OCI-LY7 (cell line): ENCODE measurements at regions of chr6 and their contacts with region 1.

Region 1: GRCh38 chr6:24689964-24690363 is 23.1 kb downstream of the ACOT13 start:
- DNase-seq: no peak
- H3K4me3 ChIP-seq: no peak overlapping the region
- H3K27ac ChIP-seq: no peak overlapping the region
- H3K4me1 ChIP-seq: peaks cover 7% of the 10 kb centered on the region
- CTCF ChIP-seq: no peak

Region 2: DNA sequence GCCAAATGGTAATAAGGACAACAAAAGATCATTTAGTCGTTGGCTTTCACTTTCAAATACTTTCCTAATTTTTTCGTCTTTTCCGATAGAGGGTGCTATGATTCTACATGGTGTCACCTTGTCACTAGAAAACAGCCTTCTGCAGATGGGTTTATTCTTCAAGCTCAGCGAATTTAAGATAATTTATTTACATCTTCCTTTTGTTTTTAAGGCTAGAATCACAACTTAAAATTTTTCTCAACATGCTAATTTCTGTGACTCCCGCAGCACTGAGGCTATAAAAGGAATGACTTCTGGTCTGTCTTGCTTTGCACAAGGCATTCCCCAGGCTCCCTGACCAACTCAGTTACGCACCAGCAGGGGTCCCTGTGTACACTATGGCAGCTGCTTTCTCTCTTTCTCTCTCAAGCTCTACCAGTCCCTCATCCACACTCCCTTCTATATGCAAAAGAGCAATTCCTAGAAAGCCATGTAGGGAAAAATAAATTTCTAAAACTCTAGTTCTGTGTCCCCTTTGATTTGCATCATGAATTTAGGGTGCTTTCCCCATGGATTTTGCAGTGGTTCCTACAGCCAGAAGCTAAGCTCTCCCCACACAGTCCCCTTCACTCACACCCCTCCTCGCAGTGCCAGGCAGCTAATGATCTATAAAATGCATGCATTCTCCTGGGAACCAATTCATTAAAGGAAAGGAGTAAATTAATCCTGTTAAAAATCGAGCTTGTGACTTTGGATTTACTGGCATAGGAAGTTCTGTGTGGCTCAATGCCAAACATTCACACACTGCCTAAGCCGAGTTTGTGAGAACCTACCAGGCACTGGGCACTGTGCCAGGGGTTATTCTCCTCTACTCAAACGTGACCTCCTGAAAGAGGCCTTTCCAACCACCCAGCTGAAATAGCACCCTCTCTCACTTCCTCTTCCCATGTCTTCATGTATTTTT is 406.6 kb before region 1 on chr6:
- CTCF ChIA-PET with region 1: no interaction called
- POLR2A ChIA-PET with region 1: no interaction called
- intact Hi-C with region 1: loop called (anchors 2 kb)
- DNase-seq: peak; percentile 65
- H3K4me3 ChIP-seq: no peak overlapping the region
- H3K27ac ChIP-seq: no peak overlapping the region
- H3K4me1 ChIP-seq: peaks cover 7% of the 10 kb centered on the region
- CTCF ChIP-seq: peak; percentile 95

Region 3: GRCh38 chr6:24431045-24431451 is 258.9 kb before region 1 on chr6:
- CTCF ChIA-PET with region 1: no interaction called
- POLR2A ChIA-PET with region 1: interaction called, 3 read pairs
- intact Hi-C with region 1: loop called (anchors 5 kb)
- DNase-seq: peak; percentile 58
- H3K4me3 ChIP-seq: no peak overlapping the region
- H3K27ac ChIP-seq: no peak overlapping the region
- H3K4me1 ChIP-seq: no peaks in the 10 kb centered on the region
- CTCF ChIP-seq: peak; percentile 95

Region 4: DNA sequence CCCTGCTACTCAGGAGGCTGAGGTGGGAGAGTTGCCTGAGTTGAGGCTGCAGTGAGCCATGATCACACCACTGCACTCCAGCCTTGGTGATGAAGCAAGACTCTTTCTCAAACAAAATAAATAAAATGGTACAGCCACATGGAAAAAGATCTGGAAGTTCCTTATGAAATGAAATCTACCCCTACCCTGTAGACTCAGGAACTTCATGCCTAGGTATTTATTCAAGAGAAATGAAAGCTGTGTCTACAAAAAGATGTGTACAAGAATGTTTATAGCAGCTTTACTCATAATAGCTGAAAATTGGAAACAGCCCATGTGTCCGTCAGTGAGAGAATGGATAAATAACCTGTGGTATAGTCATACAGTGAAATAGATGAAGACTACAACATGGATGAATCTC is 44.2 kb after region 1 on chr6:
- CTCF ChIA-PET with region 1: no interaction called
- POLR2A ChIA-PET with region 1: no interaction called
- intact Hi-C with region 1: no loop called
- DNase-seq: no peak
- H3K4me3 ChIP-seq: no peak overlapping the region
- H3K27ac ChIP-seq: no peak overlapping the region
- H3K4me1 ChIP-seq: no peaks in the 10 kb centered on the region
- CTCF ChIP-seq: no peak

Region 5: DNA sequence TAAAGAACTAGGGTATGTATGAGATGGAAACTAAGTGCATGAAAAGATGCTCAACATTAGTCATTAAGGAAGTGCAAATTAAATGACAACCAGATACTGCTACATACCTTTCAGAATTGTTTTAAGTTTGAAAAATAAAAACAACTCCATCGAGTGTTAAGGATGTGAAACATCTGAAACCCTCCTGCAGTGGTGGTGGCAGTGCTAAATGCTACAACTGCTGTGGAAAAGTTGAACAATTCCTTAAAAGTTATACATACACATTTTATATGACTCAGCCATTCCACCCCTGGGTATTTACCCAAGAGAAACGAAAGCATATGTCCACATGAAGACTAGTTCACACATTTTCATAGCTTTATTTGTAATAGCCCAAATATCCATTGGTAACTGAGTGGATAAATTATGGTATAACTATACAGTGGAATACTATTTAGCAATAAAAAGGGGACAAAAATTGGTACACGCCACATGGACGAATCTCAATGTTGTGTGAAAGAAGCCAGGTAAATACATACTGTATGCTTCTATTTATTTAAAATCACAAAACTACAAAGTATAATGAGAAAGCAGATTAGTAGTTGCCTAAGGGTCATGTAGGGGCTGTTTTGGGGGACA is 98.2 kb after region 1 on chr6:
- CTCF ChIA-PET with region 1: no interaction called
- POLR2A ChIA-PET with region 1: no interaction called
- intact Hi-C with region 1: no loop called
- DNase-seq: no peak
- H3K4me3 ChIP-seq: no peak overlapping the region
- H3K27ac ChIP-seq: no peak overlapping the region
- H3K4me1 ChIP-seq: no peaks in the 10 kb centered on the region
- CTCF ChIP-seq: no peak